IMR-90 (cell line): ENCODE measurements at regions of chr15 and their contacts with region 1.

Region 1: DNA sequence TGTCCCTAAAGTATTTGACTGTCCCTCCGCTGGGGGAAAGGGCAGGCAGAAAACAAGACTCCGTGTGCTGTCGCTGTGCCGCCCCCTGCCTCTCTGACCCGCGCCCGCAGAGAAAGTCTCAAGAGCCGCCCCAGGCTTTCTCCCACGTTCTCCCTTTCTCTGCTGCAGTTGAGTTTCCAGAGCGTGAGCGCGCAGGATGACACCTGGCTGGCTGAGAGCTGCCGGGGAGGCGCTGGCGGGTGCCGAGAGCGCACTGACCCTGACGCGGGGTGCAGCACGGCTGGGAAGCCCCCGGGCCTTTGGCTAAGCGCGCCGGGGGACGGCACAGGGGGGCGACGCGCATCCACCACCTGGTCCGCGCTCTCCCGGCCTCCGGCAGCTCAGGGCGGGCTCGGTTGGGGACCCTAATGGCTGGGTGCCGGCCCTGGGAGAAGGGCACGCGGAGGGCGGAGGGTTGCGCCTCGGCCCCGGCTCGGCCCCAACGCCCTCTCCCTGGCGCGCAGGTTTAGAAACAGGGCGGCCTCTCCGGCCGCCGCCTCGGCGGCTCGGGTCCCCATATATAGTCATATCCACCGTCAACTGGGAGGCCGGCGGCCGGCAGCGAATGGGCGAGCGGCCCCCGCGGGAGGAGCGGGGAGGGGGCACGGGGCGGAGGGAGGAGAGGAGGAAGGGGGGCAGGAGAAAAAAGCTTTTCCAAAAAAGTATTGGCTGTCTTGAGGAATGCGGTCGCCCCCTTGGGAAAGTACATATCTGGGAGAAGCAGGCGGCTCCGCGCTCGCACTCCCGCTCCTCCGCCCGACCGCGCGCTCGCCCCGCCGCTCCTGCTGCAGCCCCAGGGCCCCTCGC is at the start of gene TPM1:
- DNase-seq: peak; percentile 93
- ATAC-seq: peak; percentile 85
- H3K4me3 ChIP-seq: peak within 1 kb of the TSS; percentile 84
- H3K27ac ChIP-seq: peak within 1 kb of the TSS; percentile 87
- H3K4me1 ChIP-seq: peaks cover 9% of the 10 kb centered on the region
- H3K27me3 ChIP-seq: no peaks in the 10 kb centered on the region
- CTCF ChIP-seq: peak; percentile 30; the same call in 1 of the 2 replicates
- POLR2A ChIP-seq: peak; percentile 97
- RAD21 ChIP-seq: peak; percentile 43
- total RNA-seq, gene TPM1: 661 and 997 TPM in 2 replicates

Region 2: GRCh38 chr15:62464705-62465104 is 577.5 kb before region 1 on chr15:
- CTCF ChIA-PET with region 1: no interaction called
- POLR2A ChIA-PET with region 1: no interaction called
- dilution Hi-C with region 1: no loop called
- in situ Hi-C with region 1: no loop called
- intact Hi-C with region 1: no loop called
- DNase-seq: peak; percentile 67
- ATAC-seq: peak; percentile 89
- H3K4me3 ChIP-seq: no peak overlapping the region
- H3K27ac ChIP-seq: no peak overlapping the region
- H3K4me1 ChIP-seq: peaks cover 16% of the 10 kb centered on the region
- H3K27me3 ChIP-seq: no peaks in the 10 kb centered on the region
- CTCF ChIP-seq: no peak
- POLR2A ChIP-seq: no peak
- RAD21 ChIP-seq: no peak

Region 3: DNA sequence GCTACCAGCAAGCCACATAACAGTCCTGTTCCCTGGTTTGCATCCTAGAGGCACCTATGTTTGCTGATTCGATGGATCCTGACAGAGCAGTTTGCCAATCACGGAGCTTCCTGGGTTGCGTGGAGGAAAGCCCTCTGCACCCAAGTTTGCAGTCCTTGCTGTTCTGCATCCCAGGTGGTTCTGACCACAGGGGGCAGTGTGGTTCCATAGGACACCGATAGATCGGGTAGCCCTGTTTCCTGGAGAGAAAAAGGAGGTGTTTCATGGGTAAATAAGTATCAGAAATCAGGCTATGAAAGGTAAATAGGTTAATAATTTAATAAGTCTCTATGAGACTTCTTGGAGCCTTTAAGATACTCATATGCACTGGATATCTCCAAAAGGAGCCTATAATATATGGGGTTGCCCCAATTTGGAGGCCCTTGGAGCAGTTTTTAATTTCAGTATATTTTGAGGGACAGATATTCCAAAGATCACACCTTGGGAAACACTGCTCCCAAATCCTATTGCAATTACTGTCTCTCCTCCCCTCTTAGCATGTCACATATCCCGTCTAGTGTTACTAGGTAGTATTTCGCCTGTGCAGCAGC is 194.2 kb before region 1 on chr15:
- CTCF ChIA-PET with region 1: interaction called, 4 read pairs
- POLR2A ChIA-PET with region 1: interaction called, 10 read pairs
- dilution Hi-C with region 1: no loop called
- in situ Hi-C with region 1: no loop called
- intact Hi-C with region 1: loop called (anchors 2 kb)
- DNase-seq: peak; percentile 54
- ATAC-seq: no peak
- H3K4me3 ChIP-seq: no peak overlapping the region
- H3K27ac ChIP-seq: no peak overlapping the region
- H3K4me1 ChIP-seq: peaks cover 18% of the 10 kb centered on the region
- H3K27me3 ChIP-seq: no peaks in the 10 kb centered on the region
- CTCF ChIP-seq: peak; percentile 60
- POLR2A ChIP-seq: no peak
- RAD21 ChIP-seq: peak; percentile 75

Region 4: GRCh38 chr15:62868507-62868906 is 173.7 kb before region 1 on chr15:
- CTCF ChIA-PET with region 1: no interaction called
- POLR2A ChIA-PET with region 1: no interaction called
- dilution Hi-C with region 1: no loop called
- in situ Hi-C with region 1: no loop called
- intact Hi-C with region 1: no loop called
- DNase-seq: no peak
- ATAC-seq: no peak
- H3K4me3 ChIP-seq: no peak overlapping the region
- H3K27ac ChIP-seq: no peak overlapping the region
- H3K4me1 ChIP-seq: peaks cover 5% of the 10 kb centered on the region
- H3K27me3 ChIP-seq: peaks cover 2% of the 10 kb centered on the region; the same call in 1 of the 2 replicates
- CTCF ChIP-seq: no peak
- POLR2A ChIP-seq: no peak
- RAD21 ChIP-seq: no peak

Region 5: DNA sequence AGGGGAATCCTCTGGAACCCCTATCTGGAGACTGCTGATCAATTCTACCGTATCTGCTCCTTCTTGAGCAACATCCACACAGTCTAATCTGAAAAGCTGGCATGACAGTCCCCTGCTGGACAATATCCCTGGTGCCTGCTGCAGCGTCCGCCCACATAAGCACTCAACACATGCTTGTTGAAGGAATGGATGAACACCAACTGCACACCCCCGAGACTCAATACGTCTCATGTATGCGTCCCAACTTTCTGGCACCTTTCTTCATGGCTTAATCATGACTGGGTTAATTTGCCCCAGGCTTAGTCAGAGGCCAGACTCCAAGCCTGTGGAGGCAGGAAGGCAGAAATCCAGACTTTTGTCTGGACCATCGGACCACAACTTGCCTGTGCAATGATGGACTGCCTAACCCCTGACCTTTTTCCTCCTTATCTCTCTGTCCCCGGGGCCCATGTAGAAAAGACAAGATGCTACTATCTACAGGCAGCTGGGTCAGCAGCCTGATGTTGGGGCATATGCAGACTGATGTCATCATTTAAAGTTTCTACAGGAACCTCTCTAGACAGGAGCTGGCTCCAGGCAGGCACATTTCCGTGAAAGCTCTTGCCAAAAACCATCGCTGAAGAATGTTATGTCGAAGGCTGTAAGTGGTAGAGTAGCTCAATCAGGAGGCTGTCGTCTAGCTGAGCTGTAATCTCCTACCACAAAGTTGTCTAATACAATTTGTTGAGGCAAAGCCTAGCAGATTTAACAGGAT is 113.8 kb before region 1 on chr15:
- CTCF ChIA-PET with region 1: interaction called, 3 read pairs
- POLR2A ChIA-PET with region 1: interaction called, 3 read pairs
- dilution Hi-C with region 1: no loop called
- in situ Hi-C with region 1: no loop called
- intact Hi-C with region 1: loop called (anchors 1 kb)
- DNase-seq: peak; percentile 92
- ATAC-seq: peak; percentile 64
- H3K4me3 ChIP-seq: no peak overlapping the region
- H3K27ac ChIP-seq: peak overlapping the region; percentile 58
- H3K4me1 ChIP-seq: peaks cover 19% of the 10 kb centered on the region
- H3K27me3 ChIP-seq: no peaks in the 10 kb centered on the region
- CTCF ChIP-seq: peak; percentile 56
- POLR2A ChIP-seq: no peak
- RAD21 ChIP-seq: peak; percentile 74